ENCODE measurements at regions of chr3 and their contacts with region 1.

Region 1: DNA sequence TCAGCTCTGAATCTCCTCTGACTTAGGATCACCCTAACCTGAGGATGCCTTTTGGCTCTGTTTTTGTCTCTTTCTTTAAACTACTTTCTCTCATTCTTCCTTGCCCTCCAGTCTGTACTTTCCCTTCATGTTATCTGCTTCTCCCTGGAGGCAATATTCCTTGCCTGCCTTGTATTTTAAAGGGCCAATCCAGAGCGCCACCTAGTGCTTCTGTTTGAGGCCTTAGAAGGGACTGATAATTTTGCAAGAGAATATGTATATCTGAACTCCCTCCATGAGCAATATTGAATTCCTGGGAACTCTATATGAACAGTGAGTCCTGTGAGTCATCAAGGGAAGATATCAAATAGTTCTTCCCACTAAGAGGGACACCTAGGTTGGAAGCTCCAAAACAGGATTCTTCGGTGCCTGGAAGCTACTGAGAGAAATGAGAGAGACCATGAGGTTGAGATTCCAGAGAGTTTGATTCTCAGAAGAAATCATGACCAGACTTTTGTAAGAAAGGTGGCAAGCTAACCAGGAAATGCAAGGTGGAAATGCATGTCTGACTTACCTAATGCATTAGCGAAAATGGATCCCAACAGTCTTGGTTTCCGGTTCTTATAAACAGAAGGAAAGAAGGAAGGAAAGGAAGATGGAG is 203.8 kb upstream of the CD96 start:
- DNase-seq: peak; percentile 86
- ATAC-seq: peak; percentile 95
- H3K4me3 ChIP-seq: no peak overlapping the region
- H3K27ac ChIP-seq: no peak overlapping the region
- H3K4me1 ChIP-seq: no peaks in the 10 kb centered on the region; the same call in 1 of the 2 replicates
- H3K27me3 ChIP-seq: no peaks in the 10 kb centered on the region
- CTCF ChIP-seq: peak; percentile 91
- POLR2A ChIP-seq: 0 out of 2 replicates have a peak, but pooled peaks have one; percentile 22
- RAD21 ChIP-seq: peak; percentile 95

Region 2: DNA sequence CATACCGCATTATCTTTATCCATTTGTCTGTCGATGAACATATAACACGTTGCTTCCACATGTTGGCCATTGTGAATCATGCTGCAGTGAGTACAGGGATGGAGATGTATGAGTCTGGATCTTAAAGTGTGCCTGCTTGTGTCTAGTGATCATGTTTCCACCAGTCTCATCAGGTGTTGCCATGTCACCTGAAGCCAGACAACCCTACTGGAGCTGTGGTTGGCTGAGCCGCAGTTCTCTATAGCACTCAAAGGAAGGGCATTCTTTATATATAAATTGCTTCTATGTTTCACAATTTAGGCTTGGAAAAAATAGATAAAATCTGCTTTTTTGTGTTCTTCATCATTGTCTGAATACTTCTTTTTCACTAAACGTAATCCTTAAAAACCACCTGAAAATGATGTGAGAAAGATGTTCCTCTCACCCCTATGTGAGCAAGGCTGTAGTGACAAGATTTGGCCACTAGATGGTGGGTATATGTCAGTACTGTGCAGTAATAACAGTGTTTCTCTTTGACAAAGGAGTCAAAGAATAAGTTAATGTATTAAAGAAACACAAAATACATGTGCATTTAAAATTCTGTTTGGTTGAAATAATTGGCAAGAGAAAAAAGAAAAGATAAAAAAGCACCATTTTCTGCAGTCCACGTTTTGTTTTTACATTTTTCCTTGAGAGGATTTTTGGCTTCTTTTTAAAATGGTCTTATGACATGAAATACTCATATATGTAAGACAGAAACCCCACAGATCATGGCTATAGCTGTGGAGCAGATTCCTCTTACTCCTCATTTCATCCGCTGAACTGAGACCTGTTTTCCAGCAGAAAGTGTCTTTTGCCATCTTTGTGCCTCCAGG is 1606.3 kb before region 1 on chr3:
- CTCF ChIA-PET with region 1: no interaction called
- POLR2A ChIA-PET with region 1: no interaction called
- dilution Hi-C with region 1: no loop called
- in situ Hi-C with region 1: no loop called
- intact Hi-C with region 1: loop called (anchors 5 kb)
- DNase-seq: peak; percentile 72
- ATAC-seq: peak; percentile 99
- H3K4me3 ChIP-seq: no peak overlapping the region
- H3K27ac ChIP-seq: no peak overlapping the region
- H3K4me1 ChIP-seq: no peaks in the 10 kb centered on the region; the same call in 1 of the 2 replicates
- H3K27me3 ChIP-seq: no peaks in the 10 kb centered on the region
- CTCF ChIP-seq: peak; percentile 85
- POLR2A ChIP-seq: no peak
- RAD21 ChIP-seq: peak; percentile 90

Region 3: GRCh38 chr3:110234831-110235230 is 1103.3 kb before region 1 on chr3:
- CTCF ChIA-PET with region 1: no interaction called
- POLR2A ChIA-PET with region 1: no interaction called
- dilution Hi-C with region 1: no loop called
- in situ Hi-C with region 1: no loop called
- intact Hi-C with region 1: no loop called
- DNase-seq: peak; percentile 28
- ATAC-seq: 0 out of 2 replicates have a peak, but pooled peaks have one; percentile 24
- H3K4me3 ChIP-seq: no peak overlapping the region
- H3K27ac ChIP-seq: no peak overlapping the region
- H3K4me1 ChIP-seq: no peaks in the 10 kb centered on the region
- H3K27me3 ChIP-seq: no peaks in the 10 kb centered on the region
- CTCF ChIP-seq: no peak
- POLR2A ChIP-seq: no peak
- RAD21 ChIP-seq: no peak

Region 4: DNA sequence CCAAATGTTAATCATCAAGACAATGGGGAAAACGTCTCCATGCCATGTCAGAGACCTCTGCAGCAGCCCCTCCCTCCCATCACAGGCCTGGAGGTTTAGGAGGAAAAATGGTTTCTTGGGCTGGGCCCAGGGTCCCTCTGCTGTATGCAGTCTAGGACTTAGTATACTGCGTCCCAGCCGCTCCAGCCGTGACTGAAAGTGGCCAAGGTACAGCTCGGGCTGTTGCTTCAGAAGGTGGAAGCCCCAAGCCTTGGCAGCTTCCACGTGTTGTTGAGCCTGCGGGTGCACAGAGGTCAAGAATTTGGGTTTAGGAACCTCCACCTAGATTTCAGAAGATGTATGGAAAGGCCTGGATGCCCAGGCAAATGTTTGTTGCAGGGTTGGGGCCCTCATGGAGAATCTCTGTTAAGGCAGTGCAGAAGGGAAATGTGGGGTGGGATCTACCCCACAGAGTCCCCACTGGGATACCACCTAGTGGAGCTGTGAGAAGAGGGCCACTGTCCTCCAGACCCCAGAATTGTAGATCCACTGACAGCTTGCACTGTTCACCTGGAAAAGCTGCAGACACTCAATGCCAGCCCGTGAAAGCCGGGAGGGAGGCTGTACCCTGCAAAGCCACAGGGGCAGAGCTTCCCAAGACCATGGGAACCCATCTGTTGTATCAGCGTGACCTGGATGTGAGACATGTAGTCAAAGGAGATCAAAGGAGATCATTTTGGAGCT is 241.5 kb before region 1 on chr3:
- CTCF ChIA-PET with region 1: no interaction called
- POLR2A ChIA-PET with region 1: no interaction called
- dilution Hi-C with region 1: no loop called
- in situ Hi-C with region 1: loop called (anchors 10 kb)
- intact Hi-C with region 1: no loop called
- DNase-seq: no peak
- ATAC-seq: no peak
- H3K4me3 ChIP-seq: no peak overlapping the region
- H3K27ac ChIP-seq: no peak overlapping the region
- H3K4me1 ChIP-seq: peaks cover 11% of the 10 kb centered on the region
- H3K27me3 ChIP-seq: no peaks in the 10 kb centered on the region
- CTCF ChIP-seq: no peak
- POLR2A ChIP-seq: no peak
- RAD21 ChIP-seq: no peak

Region 5: DNA sequence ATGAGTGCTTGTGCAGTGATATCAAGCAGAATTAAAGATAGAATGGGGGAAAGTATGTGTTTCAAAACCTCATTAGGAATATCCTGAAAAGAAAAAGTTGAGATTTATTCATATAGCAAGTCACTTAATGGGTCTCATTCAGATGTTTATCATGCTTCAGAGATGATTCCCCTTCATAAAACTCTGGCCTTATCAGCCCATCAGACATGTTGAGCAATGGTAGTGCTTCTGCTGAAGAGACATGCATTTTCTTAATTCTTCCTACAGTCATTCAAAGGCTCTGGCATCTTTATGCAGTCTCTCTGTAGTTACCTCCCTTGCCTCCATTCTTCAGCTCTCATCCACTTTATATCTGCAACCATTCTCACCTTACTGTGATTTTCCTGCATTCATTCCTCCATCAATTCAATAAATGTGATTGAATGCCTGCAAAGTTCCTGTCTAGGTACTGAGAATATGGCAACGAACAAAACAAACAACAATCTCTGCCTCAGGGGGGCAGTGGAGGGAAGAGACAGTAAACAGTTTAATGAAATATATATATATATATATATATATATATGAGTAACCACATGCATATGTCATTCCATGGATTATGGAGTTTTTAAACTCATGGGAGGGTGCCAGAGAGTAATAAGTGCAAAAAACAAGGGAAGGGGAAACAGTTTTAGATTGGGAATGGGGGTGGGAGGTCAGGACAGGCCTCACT is 128.0 kb before region 1 on chr3:
- CTCF ChIA-PET with region 1: no interaction called
- POLR2A ChIA-PET with region 1: no interaction called
- dilution Hi-C with region 1: no loop called
- in situ Hi-C with region 1: no loop called
- intact Hi-C with region 1: loop called (anchors 2 kb)
- DNase-seq: peak; percentile 76
- ATAC-seq: peak; percentile 67
- H3K4me3 ChIP-seq: no peak overlapping the region
- H3K27ac ChIP-seq: no peak overlapping the region
- H3K4me1 ChIP-seq: peaks cover 5% of the 10 kb centered on the region
- H3K27me3 ChIP-seq: no peaks in the 10 kb centered on the region
- CTCF ChIP-seq: peak; percentile 17; the same call in 1 of the 2 replicates
- POLR2A ChIP-seq: no peak
- RAD21 ChIP-seq: no peak

Region 6: DNA sequence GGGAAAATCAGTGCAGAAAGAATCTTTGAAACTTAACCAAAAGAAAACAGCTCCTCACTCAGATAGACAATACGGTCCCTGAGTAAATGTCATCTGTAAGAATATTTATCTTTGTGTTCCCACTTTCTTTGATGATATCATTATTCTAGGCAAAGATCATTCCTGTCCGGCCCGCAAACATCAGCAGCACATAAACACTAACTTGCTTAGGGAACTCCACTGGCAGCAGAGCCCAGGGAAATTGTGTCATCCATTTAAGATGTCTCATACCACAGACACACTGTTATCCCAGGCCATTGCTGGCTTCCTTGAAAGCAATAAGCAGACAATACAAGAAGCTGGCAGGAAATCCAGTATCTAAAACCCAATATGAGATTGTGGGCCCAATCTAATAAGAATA is 183.7 kb after region 1 on chr3:
- CTCF ChIA-PET with region 1: no interaction called
- POLR2A ChIA-PET with region 1: no interaction called
- dilution Hi-C with region 1: no loop called
- in situ Hi-C with region 1: no loop called
- intact Hi-C with region 1: no loop called
- DNase-seq: peak; percentile 83
- ATAC-seq: peak; percentile 99
- H3K4me3 ChIP-seq: no peak overlapping the region
- H3K27ac ChIP-seq: no peak overlapping the region
- H3K4me1 ChIP-seq: no peaks in the 10 kb centered on the region
- H3K27me3 ChIP-seq: peaks cover 28% of the 10 kb centered on the region
- CTCF ChIP-seq: no peak
- POLR2A ChIP-seq: no peak
- RAD21 ChIP-seq: no peak

Region 7: DNA sequence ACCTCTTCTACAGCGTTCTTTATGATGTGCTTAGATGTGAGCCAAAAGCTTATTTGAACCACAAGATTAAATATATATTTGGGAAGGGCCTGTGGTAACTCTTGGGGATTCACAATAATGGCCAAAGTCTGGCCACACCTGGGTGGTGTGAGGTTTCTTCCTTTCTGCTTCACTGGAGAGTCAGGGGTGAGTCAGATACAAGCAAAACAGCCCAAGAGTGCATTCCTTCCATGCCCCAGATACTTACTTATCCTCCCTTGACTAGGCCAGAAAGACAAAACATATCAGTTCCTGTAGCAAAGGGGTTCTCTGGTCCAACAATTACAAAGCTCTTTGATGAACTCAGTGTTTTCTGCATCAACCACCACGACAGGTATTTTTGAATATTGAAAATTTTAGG is 256.0 kb after region 1 on chr3:
- CTCF ChIA-PET with region 1: no interaction called
- POLR2A ChIA-PET with region 1: no interaction called
- dilution Hi-C with region 1: no loop called
- in situ Hi-C with region 1: no loop called
- intact Hi-C with region 1: no loop called
- DNase-seq: peak; percentile 91
- ATAC-seq: peak; percentile 83
- H3K4me3 ChIP-seq: no peak overlapping the region
- H3K27ac ChIP-seq: peak overlapping the region; percentile 47
- H3K4me1 ChIP-seq: peaks cover 24% of the 10 kb centered on the region
- H3K27me3 ChIP-seq: no peaks in the 10 kb centered on the region
- CTCF ChIP-seq: no peak
- POLR2A ChIP-seq: no peak
- RAD21 ChIP-seq: no peak

Region 8: DNA sequence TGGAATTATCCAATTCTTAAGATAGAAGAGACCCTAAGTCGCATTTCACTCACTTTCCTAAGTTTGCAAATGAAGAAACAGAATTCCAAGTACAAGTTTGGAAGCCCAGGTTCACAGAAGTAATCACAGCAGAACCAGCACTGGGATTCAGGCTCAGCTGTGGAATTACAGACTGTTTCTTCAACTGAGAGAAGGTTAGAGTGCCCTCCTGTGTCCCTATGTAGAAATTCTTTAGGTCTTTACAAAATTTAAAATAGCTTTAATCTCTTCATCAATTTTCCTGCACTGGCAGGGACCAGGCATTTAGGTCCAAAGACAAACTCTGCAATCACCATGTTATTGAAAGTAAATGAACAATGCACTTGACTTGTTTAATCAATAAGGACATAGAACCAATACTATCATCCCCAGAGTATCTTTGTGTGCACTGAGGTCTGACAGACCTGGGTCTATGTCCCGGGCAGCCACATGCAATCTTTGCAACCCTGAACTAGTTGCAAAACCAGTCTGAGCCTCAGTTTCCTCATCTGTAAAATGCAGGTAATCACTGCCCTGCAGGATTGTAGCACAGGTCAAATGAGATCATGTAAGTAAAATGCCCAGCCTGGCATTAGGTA is 353.2 kb after region 1 on chr3:
- CTCF ChIA-PET with region 1: no interaction called
- POLR2A ChIA-PET with region 1: no interaction called
- dilution Hi-C with region 1: no loop called
- in situ Hi-C with region 1: no loop called
- intact Hi-C with region 1: loop called (anchors 10 kb)
- DNase-seq: peak; percentile 76
- ATAC-seq: peak; percentile 64
- H3K4me3 ChIP-seq: no peak overlapping the region
- H3K27ac ChIP-seq: no peak overlapping the region
- H3K4me1 ChIP-seq: peaks cover 3% of the 10 kb centered on the region; the same call in 1 of the 2 replicates
- H3K27me3 ChIP-seq: no peaks in the 10 kb centered on the region
- CTCF ChIP-seq: peak; percentile 67
- POLR2A ChIP-seq: no peak
- RAD21 ChIP-seq: peak; percentile 77